Panc1 (cell line): ENCODE measurements at regions of chr11 and their contacts with region 1.

Region 1: GRCh38 chr11:73288873-73289707 is 17.0 kb downstream of the P2RY6 start:
- DNase-seq: peak; percentile 56
- ATAC-seq: peak; percentile 85
- H3K4me3 ChIP-seq: peak overlapping the region; percentile 15 to 44
- H3K27ac ChIP-seq: peak overlapping the region; percentile 61
- H3K4me1 ChIP-seq: peaks cover 12% of the 10 kb centered on the region
- H3K27me3 ChIP-seq: no peaks in the 10 kb centered on the region
- CTCF ChIP-seq: peak; percentile 100

Region 2: GRCh38 chr11:73184953-73185671 is 104.0 kb before region 1 on chr11:
- CTCF ChIA-PET with region 1: interaction called, 6 read pairs
- POLR2A ChIA-PET with region 1: no interaction called
- in situ Hi-C with region 1: no loop called
- intact Hi-C with region 1: loop called (anchors 1 kb)
- DNase-seq: peak; percentile 56
- ATAC-seq: peak; percentile 93
- H3K4me3 ChIP-seq: peak overlapping the region in 1 of 2 experiments; percentile 32; a peak in 3 of 4 replicates
- H3K27ac ChIP-seq: no peak overlapping the region
- H3K4me1 ChIP-seq: peaks cover 5% of the 10 kb centered on the region; the same call in 1 of the 2 replicates
- H3K27me3 ChIP-seq: 0 out of 2 replicates have a peak, but pooled peaks cover 3% of the 10 kb centered on the region
- CTCF ChIP-seq: peak; percentile 98